A673 (cell line): ENCODE measurements at regions of chr13 and their contacts with region 1.

Region 1: GRCh38 chr13:95660981-95661581 is 15.9 kb upstream of the DNAJC3 start:
- DNase-seq: peak; percentile 61
- H3K4me3 ChIP-seq: no peak overlapping the region
- H3K27ac ChIP-seq: no peak overlapping the region
- H3K4me1 ChIP-seq: no peaks in the 10 kb centered on the region
- H3K27me3 ChIP-seq: no peaks in the 10 kb centered on the region
- CTCF ChIP-seq: peak; percentile 73

Region 2: GRCh38 chr13:95536632-95537241 is 124.3 kb before region 1 on chr13:
- CTCF ChIA-PET with region 1: interaction called, 3 read pairs
- POLR2A ChIA-PET with region 1: no interaction called
- intact Hi-C with region 1: loop called (anchors 5 kb)
- DNase-seq: peak; percentile 59
- H3K4me3 ChIP-seq: no peak overlapping the region
- H3K27ac ChIP-seq: no peak overlapping the region
- H3K4me1 ChIP-seq: no peaks in the 10 kb centered on the region
- H3K27me3 ChIP-seq: no peaks in the 10 kb centered on the region
- CTCF ChIP-seq: peak; percentile 64

Region 3: DNA sequence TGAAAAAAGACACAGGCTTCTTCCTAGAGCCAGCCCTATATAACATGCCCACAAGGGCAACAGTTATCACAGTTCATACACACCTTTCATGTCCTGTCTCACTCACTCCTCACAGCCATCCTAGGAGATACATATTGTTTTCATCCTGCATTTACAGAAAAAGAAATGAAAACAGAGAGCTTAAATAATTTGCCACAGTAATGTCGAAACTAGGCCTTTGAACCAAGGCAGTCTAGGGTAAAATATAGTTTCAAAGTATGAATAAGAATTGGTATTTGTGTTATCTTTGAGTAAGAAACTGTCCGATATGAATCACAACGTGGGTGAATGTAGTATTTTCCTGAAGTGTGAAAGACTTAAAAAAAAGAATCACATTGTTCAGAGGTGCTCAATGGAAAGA is 81.8 kb before region 1 on chr13:
- CTCF ChIA-PET with region 1: interaction called, 14 read pairs
- POLR2A ChIA-PET with region 1: no interaction called
- intact Hi-C with region 1: no loop called
- DNase-seq: no peak
- H3K4me3 ChIP-seq: no peak overlapping the region
- H3K27ac ChIP-seq: no peak overlapping the region
- H3K4me1 ChIP-seq: no peaks in the 10 kb centered on the region
- H3K27me3 ChIP-seq: no peaks in the 10 kb centered on the region
- CTCF ChIP-seq: no peak

Region 4: DNA sequence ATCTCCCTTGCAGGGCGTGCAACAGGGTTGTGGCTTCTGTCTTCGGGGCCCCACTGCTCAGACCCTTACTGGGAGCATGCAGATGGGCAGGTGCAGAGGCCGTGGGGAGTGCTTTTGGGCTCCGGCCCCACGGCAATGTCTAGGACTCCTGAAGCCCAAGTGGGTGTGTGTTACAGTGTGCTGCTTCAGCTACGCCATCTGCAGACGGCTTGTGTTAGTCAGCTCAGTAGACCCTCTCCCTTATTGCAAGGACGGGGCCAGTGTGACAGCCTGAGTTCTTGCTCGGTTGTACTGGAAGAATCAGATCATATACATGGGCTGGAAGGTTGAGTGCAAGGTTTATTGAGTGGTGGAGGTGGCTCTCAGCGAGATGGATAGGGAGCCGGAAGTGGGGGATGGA is 55.1 kb after region 1 on chr13:
- CTCF ChIA-PET with region 1: interaction called, 12 read pairs
- POLR2A ChIA-PET with region 1: no interaction called
- intact Hi-C with region 1: no loop called
- DNase-seq: no peak
- H3K4me3 ChIP-seq: no peak overlapping the region
- H3K27ac ChIP-seq: no peak overlapping the region
- H3K4me1 ChIP-seq: no peaks in the 10 kb centered on the region
- H3K27me3 ChIP-seq: no peaks in the 10 kb centered on the region
- CTCF ChIP-seq: no peak